Naive thymus-derived CD4-positive, alpha-beta T cell (primary cell): ENCODE measurements at regions of chr11 and their contacts with region 1.

Region 1: GRCh38 chr11:11841723-11842420 is at the start of gene USP47:
- DNase-seq: peak; percentile 90 to 98 (median 95)
- ATAC-seq: peak; percentile 90
- H3K4me3 ChIP-seq: peak within 1 kb of the TSS; percentile 76
- H3K4me3 Mint-ChIP-seq: peak within 1 kb of the TSS in 1 of 10 donors; percentile 59
- H3K27ac ChIP-seq: peak within 1 kb of the TSS; percentile 100
- H3K27ac Mint-ChIP-seq: peak within 1 kb of the TSS in 1 of 9 donors; percentile 64
- H3K4me1 ChIP-seq: peaks cover 27 to 36% of the 10 kb centered on the region in 2 donors
- H3K4me1 Mint-ChIP-seq: peaks cover 0 to 25% (median 3%) of the 10 kb centered on the region in 7 donors
- H3K27me3 ChIP-seq: no peaks in the 10 kb centered on the region
- H3K27me3 Mint-ChIP-seq: peaks cover 0 to 17% (median 13%) of the 10 kb centered on the region in 5 donors
- total RNA-seq, gene USP47: 45.6 to 71.8 (median 59.1) TPM

Region 2: GRCh38 chr11:10808553-10809372 is 1033.1 kb before region 1 on chr11 and contains the start of gene EIF4G2:
- CTCF ChIA-PET with region 1: no interaction called
- POLR2A ChIA-PET with region 1: interaction called, 35 read pairs
- intact Hi-C with region 1: loop called (anchors 1 to 2 kb)
- DNase-seq: peak; percentile 97 to 99 (median 99)
- ATAC-seq: peak; percentile 95
- H3K4me3 ChIP-seq: peak within 1 kb of the TSS; percentile 98
- H3K4me3 Mint-ChIP-seq: peak within 1 kb of the TSS; percentile 93 to 98 (median 97)
- H3K27ac ChIP-seq: peak within 1 kb of the TSS; percentile 95
- H3K27ac Mint-ChIP-seq: peak within 1 kb of the TSS; percentile 95 to 99 (median 98)
- H3K4me1 ChIP-seq: peaks cover 29 to 37% of the 10 kb centered on the region in 2 donors
- H3K4me1 Mint-ChIP-seq: peaks cover 25 to 53% (median 43%) of the 10 kb centered on the region in 7 donors
- H3K27me3 ChIP-seq: no peaks in the 10 kb centered on the region
- H3K27me3 Mint-ChIP-seq: peaks cover 0 to 5% (median 0%) of the 10 kb centered on the region in 5 donors
- total RNA-seq, gene EIF4G2: 596 to 843 (median 720) TPM

Region 3: GRCh38 chr11:11621573-11622319 is 220.1 kb before region 1 on chr11 and contains the start of gene GALNT18:
- CTCF ChIA-PET with region 1: no interaction called
- POLR2A ChIA-PET with region 1: no interaction called
- intact Hi-C with region 1: loop called in 1 of 2 experiments (anchors 5 kb)
- DNase-seq: peak; percentile 11 to 89 (median 27)
- ATAC-seq: peak; percentile 95
- H3K4me3 ChIP-seq: peak within 1 kb of the TSS; percentile 17
- H3K4me3 Mint-ChIP-seq: peak within 1 kb of the TSS in 9 of 10 donors; percentile 57 to 89 (median 65)
- H3K27ac ChIP-seq: no peak within 1 kb of the TSS
- H3K27ac Mint-ChIP-seq: no peak within 1 kb of the TSS
- H3K4me1 ChIP-seq: peaks cover 0 to 7% of the 10 kb centered on the region in 2 donors
- H3K4me1 Mint-ChIP-seq: peaks cover 0 to 15% (median 8%) of the 10 kb centered on the region in 7 donors
- H3K27me3 ChIP-seq: peaks cover 3 to 6% of the 10 kb centered on the region in 2 donors
- H3K27me3 Mint-ChIP-seq: peaks cover 30 to 66% (median 45%) of the 10 kb centered on the region in 5 donors
- total RNA-seq, gene GALNT18: 0.20 to 1.7 TPM in 2 of 5 experiments, not detected in the others

Region 4: GRCh38 chr11:11895672-11896071 is 53.8 kb after region 1 on chr11:
- CTCF ChIA-PET with region 1: no interaction called
- POLR2A ChIA-PET with region 1: no interaction called
- intact Hi-C with region 1: loop called in 1 of 2 experiments (anchors 5 kb)
- DNase-seq: no peak
- ATAC-seq: no peak
- H3K4me3 ChIP-seq: no peak overlapping the region
- H3K4me3 Mint-ChIP-seq: no peak overlapping the region
- H3K27ac ChIP-seq: no peak overlapping the region
- H3K27ac Mint-ChIP-seq: peak overlapping the region in 4 of 9 donors; percentile 40 to 84 (median 44)
- H3K4me1 ChIP-seq: no peaks in the 10 kb centered on the region
- H3K4me1 Mint-ChIP-seq: peaks cover 2 to 23% (median 8%) of the 10 kb centered on the region in 7 donors
- H3K27me3 ChIP-seq: no peaks in the 10 kb centered on the region
- H3K27me3 Mint-ChIP-seq: no peaks in the 10 kb centered on the region

Region 5: GRCh38 chr11:12361682-12362081 is 519.8 kb after region 1 on chr11:
- CTCF ChIA-PET with region 1: no interaction called
- POLR2A ChIA-PET with region 1: no interaction called
- intact Hi-C with region 1: loop called in 1 of 2 experiments (anchors 10 kb)
- DNase-seq: no peak
- ATAC-seq: no peak
- H3K4me3 ChIP-seq: no peak overlapping the region
- H3K4me3 Mint-ChIP-seq: peak overlapping the region in 1 of 10 donors; percentile 19
- H3K27ac ChIP-seq: no peak overlapping the region
- H3K27ac Mint-ChIP-seq: peak overlapping the region in 8 of 9 donors; percentile 20 to 97 (median 70)
- H3K4me1 ChIP-seq: peaks cover 46 to 56% of the 10 kb centered on the region in 2 donors
- H3K4me1 Mint-ChIP-seq: peaks cover 20 to 83% (median 79%) of the 10 kb centered on the region in 7 donors
- H3K27me3 ChIP-seq: no peaks in the 10 kb centered on the region
- H3K27me3 Mint-ChIP-seq: peaks cover 0 to 4% (median 0%) of the 10 kb centered on the region in 5 donors